Activated CD4-positive, alpha-beta T cell treated with anti-CD3 and anti-CD28 coated beads for 36 hours (primary cell): ENCODE measurements at regions of chr19 and their contacts with region 1.

Region 1: DNA sequence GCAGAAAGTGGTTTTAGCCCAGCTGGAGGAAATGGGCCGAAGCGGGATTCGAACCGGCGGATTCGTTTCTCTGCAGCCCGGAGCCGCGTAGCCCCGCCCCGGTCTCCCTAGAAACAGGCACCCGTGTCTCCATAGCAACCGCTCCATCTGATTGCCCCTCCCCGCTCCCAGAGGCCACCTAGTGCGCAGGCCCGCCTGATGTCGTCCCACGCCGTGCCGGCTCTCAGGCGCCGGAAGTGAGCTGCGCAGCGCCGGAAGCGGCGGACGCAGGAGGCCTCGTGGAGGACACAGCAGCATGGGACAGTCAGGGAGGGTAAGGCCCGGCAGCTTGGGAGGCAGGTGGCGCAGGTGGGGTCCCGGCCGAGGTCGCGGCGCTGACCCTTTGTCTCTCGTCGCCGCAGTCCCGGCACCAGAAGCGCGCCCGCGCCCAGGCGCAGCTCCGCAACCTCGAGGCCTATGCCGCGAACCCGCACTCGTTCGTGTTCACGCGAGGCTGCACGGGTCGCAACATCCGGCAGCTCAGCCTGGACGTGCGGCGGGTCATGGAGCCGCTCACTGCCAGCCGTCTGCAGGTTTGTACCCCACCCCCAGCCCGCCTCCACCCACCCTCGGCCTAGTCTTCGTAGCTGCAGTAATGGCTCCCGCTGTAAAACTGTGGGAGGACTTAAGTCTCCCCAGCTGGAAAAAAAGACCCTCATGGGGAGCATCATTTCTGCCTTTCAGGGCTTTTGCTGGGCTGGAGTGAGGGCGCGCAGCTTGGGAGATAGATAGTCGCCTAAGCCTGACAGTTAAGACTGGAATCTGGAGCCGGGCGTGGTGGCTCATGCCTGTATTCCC is at the start of gene PPAN:
- DNase-seq: peak; percentile 99
- ATAC-seq: peak; percentile 58
- H3K4me3 Mint-ChIP-seq: peak within 1 kb of the TSS; percentile 90
- H3K27ac Mint-ChIP-seq: peak within 1 kb of the TSS; percentile 99
- H3K4me1 Mint-ChIP-seq: peaks cover 67% of the 10 kb centered on the region
- H3K27me3 Mint-ChIP-seq: no peaks in the 10 kb centered on the region
- total RNA-seq, gene PPAN: 139 to 149 TPM

Region 2: DNA sequence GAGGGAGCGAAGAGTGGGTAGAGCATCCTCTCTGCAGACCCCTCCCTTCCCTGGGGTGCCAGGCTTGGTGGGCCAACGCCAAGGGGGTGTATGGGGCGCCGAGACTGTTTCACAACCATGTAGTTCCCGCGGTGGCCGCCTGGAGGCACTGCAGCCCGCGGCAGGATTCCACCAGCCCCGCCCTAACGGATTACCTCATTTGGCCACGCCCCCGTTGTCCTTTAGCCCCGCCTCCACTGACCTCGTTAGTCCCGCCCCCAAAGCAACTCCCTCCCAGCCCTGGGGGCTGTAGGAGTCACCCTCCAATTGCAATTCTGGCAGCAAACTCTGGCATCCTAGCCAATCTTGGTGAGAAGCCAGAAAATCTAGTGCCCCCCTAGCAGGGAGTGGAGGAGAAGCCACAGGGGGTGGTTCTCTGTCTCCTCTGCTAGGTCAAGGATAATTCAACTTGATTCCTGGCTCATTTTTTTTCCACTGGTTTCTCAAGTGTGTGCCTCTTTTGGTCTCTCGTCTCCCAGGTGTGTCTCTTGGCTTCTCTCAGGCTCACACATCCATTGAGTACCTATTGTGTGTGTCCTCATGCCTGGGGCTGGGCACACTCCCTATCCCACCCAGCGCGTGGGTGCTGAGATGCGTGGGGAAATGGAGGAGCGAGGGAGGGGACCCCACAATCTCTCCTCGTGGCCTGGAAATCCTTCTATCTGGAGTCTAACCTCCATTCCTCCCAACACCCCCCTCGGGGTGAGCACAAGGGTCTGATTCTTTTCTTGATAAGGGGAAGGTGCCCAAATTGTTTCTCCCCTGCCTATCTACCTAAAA is 172.0 kb before region 1 on chr19:
- CTCF ChIA-PET with region 1: no interaction called
- POLR2A ChIA-PET with region 1: no interaction called
- intact Hi-C with region 1: loop called in 1 of 2 experiments (anchors 2 kb)
- DNase-seq: peak; percentile 94
- ATAC-seq: peak; percentile 85
- H3K4me3 Mint-ChIP-seq: no peak overlapping the region
- H3K27ac Mint-ChIP-seq: no peak overlapping the region
- H3K4me1 Mint-ChIP-seq: peaks cover 25% of the 10 kb centered on the region
- H3K27me3 Mint-ChIP-seq: peaks cover 43% of the 10 kb centered on the region

Region 3: GRCh38 chr19:10095948-10096621 is 10.2 kb before region 1 on chr19:
- CTCF ChIA-PET with region 1: interaction called, 12 read pairs
- POLR2A ChIA-PET with region 1: interaction called, 7 read pairs
- intact Hi-C with region 1: loop called (anchors 1 kb)
- DNase-seq: peak; percentile 94
- ATAC-seq: peak; percentile 90
- H3K4me3 Mint-ChIP-seq: peak overlapping the region; percentile 56
- H3K27ac Mint-ChIP-seq: peak overlapping the region; percentile 69
- H3K4me1 Mint-ChIP-seq: peaks cover 26% of the 10 kb centered on the region
- H3K27me3 Mint-ChIP-seq: no peaks in the 10 kb centered on the region

Region 4: DNA sequence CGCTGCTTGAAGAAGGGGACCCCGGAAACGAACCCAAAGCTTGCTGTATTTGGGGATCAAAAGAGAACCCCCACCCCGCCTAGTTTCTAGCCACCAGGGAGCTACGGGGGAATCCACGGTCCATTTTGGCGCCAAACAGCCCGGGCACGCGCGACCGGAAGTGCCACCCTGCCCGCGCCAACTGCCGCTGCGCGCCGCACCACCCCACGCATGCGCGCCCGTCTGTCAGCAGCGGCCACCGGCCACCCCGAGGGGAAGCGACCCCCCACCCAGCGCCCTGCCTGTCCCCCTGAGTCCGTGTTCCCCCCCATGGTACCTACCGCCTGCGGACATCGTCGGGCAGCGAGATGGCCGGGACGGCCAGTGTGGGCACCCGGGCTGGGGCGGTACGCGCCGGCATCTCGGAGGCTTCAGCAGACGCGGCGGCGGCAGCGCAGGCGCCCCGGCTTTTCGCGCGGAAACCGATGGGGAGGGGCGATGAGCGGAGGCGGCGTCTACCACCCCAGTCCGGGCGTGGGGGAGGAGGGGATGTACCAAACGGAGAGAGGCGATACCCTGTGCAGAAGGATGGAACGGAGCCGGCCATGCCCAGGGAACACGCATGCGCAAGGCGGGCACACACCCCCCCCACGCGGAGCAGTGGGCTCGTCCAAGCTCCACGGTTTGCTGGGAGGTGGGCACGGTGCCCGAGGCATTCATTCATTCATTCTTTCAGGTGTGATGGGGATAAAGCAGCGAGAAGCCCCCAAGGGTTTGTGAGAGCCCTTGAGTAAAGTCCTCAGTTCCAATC is 88.4 kb after region 1 on chr19 and contains the start of gene DNMT1:
- CTCF ChIA-PET with region 1: interaction called, 3 read pairs
- POLR2A ChIA-PET with region 1: interaction called, 6 read pairs
- intact Hi-C with region 1: loop called in 1 of 2 experiments (anchors 1 kb)
- DNase-seq: peak; percentile 99
- ATAC-seq: peak; percentile 94
- H3K4me3 Mint-ChIP-seq: peak within 1 kb of the TSS; percentile 89
- H3K27ac Mint-ChIP-seq: peak within 1 kb of the TSS; percentile 97
- H3K4me1 Mint-ChIP-seq: peaks cover 49% of the 10 kb centered on the region
- H3K27me3 Mint-ChIP-seq: no peaks in the 10 kb centered on the region
- total RNA-seq, gene DNMT1: 374 to 385 TPM

Region 5: GRCh38 chr19:10380313-10381102 is 274.2 kb after region 1 on chr19 and contains the start of gene TYK2:
- CTCF ChIA-PET with region 1: no interaction called
- POLR2A ChIA-PET with region 1: no interaction called
- intact Hi-C with region 1: loop called in 1 of 2 experiments (anchors 2 kb)
- DNase-seq: peak; percentile 97
- ATAC-seq: peak; percentile 99
- H3K4me3 Mint-ChIP-seq: peak within 1 kb of the TSS; percentile 86
- H3K27ac Mint-ChIP-seq: peak within 1 kb of the TSS; percentile 96
- H3K4me1 Mint-ChIP-seq: peaks cover 22% of the 10 kb centered on the region
- H3K27me3 Mint-ChIP-seq: no peaks in the 10 kb centered on the region
- total RNA-seq, gene TYK2: 151 to 197 TPM

Region 6: GRCh38 chr19:10502524-10503001 is 396.2 kb after region 1 on chr19:
- CTCF ChIA-PET with region 1: no interaction called
- POLR2A ChIA-PET with region 1: no interaction called
- intact Hi-C with region 1: loop called in 1 of 2 experiments (anchors 10 kb)
- DNase-seq: peak; percentile 95
- ATAC-seq: peak; percentile 91
- H3K4me3 Mint-ChIP-seq: peak overlapping the region; percentile 91
- H3K27ac Mint-ChIP-seq: peak overlapping the region; percentile 95
- H3K4me1 Mint-ChIP-seq: peaks cover 30% of the 10 kb centered on the region
- H3K27me3 Mint-ChIP-seq: no peaks in the 10 kb centered on the region

Region 7: GRCh38 chr19:11090054-11090900 is 984.0 kb after region 1 on chr19:
- CTCF ChIA-PET with region 1: no interaction called
- POLR2A ChIA-PET with region 1: no interaction called
- intact Hi-C with region 1: loop called in 1 of 2 experiments (anchors 10 kb)
- DNase-seq: peak; percentile 99
- ATAC-seq: peak; percentile 88
- H3K4me3 Mint-ChIP-seq: peak overlapping the region; percentile 93
- H3K27ac Mint-ChIP-seq: peak overlapping the region; percentile 97
- H3K4me1 Mint-ChIP-seq: peaks cover 51% of the 10 kb centered on the region
- H3K27me3 Mint-ChIP-seq: no peaks in the 10 kb centered on the region